ENCODE measurements at regions of chr10 and their contacts with region 1.

Region 1: DNA sequence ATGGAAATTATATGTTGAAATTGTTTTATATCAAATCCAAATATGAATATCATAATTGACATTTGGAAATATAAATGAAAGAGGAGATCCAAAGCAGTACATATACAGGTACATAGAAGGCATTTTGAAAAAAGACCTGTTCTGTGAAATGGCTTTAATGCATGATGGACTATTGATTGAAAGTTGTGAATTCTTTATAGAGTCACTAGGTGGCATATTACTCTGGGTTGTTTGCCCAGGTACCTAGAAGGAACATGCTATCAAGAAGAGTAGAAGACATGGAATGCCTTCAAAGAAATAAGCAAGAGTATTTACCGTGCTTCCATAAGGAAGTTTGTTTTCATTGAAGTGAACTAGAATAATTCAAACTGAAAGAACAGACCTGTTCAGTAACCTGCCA is 160.0 kb upstream of the ANK3 start:
- DNase-seq: peak; percentile 38
- H3K4me3 ChIP-seq: no peak overlapping the region
- H3K27ac ChIP-seq: no peak overlapping the region
- H3K4me1 ChIP-seq: no peaks in the 10 kb centered on the region
- H3K27me3 ChIP-seq: no peaks in the 10 kb centered on the region
- CTCF ChIP-seq: peak; percentile 30 to 61

Region 2: GRCh38 chr10:60444494-60445064 is 105.1 kb before region 1 on chr10:
- CTCF ChIA-PET with region 1: no interaction called
- dilution Hi-C with region 1: no loop called
- in situ Hi-C with region 1: no loop called
- intact Hi-C with region 1: loop called (anchors 5 kb)
- DNase-seq: no peak
- H3K4me3 ChIP-seq: no peak overlapping the region
- H3K27ac ChIP-seq: no peak overlapping the region
- H3K4me1 ChIP-seq: peaks cover 25% of the 10 kb centered on the region
- H3K27me3 ChIP-seq: no peaks in the 10 kb centered on the region
- CTCF ChIP-seq: peak; percentile 47 to 54

Region 3: DNA sequence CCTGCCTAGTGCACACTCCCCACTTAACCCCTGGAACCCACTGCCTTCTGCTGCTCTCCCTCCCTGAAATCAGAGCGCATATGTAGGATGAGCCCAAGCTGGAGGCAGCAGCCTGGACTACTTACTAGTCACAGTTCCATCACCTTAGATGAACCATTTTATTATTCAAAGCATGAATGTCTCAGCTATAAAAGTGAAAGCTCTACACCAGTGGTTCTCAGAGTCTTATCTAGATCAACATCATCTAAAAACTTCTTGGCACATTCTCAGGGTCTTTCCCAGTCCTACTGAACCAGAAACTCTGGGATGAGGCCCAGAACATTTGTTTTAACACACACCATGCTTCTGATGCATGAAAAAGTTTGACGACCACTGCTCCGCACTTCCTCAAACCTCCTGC is 59.7 kb before region 1 on chr10:
- CTCF ChIA-PET with region 1: no interaction called
- dilution Hi-C with region 1: no loop called
- in situ Hi-C with region 1: no loop called
- intact Hi-C with region 1: no loop called
- DNase-seq: no peak
- H3K4me3 ChIP-seq: no peak overlapping the region
- H3K27ac ChIP-seq: no peak overlapping the region
- H3K4me1 ChIP-seq: peaks cover 19% of the 10 kb centered on the region
- H3K27me3 ChIP-seq: no peaks in the 10 kb centered on the region
- CTCF ChIP-seq: no peak

Region 4: DNA sequence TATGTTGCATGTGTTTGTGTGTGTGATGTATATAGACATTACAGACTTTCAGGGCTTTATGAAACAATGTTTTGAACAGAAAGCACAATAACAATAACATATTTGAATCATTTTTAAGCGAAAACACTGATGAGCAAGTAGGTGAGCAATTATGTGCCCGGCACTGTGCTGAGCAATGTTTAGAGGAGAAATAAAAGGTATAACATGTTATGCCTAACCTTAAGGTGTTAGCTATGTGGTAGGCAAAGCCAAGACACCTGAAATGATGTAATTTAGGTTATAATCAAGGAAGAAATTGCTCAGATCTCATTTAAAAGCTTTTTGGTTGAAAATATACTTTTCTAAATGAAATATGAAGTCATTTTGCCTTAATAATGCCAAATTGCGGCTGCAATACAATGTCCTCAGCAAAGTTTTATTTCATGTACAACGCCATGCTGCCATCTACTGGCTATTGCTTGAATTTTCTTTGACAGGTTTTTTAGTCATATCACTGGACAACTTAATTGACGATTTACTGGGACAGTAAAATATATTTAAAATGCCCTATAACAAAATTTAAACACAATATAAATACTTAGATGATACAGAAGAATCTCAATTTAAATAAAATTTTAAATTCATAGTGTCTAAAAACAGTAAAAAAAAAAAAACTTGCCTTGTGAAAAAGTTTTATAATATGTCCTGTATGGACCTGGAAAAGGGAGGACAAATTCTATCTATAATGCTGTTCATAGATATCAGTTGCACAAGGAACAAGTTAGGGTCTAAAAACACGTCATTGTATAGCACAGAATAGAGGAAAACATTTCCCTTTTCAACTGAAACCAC is 97.5 kb after region 1 on chr10:
- CTCF ChIA-PET with region 1: no interaction called
- dilution Hi-C with region 1: no loop called
- in situ Hi-C with region 1: loop called in 1 of 2 experiments (anchors 10 kb)
- intact Hi-C with region 1: loop called (anchors 1 kb)
- DNase-seq: peak; percentile 31
- H3K4me3 ChIP-seq: no peak overlapping the region
- H3K27ac ChIP-seq: no peak overlapping the region
- H3K4me1 ChIP-seq: no peaks in the 10 kb centered on the region
- H3K27me3 ChIP-seq: no peaks in the 10 kb centered on the region
- CTCF ChIP-seq: peak; percentile 60 to 71

Region 5: DNA sequence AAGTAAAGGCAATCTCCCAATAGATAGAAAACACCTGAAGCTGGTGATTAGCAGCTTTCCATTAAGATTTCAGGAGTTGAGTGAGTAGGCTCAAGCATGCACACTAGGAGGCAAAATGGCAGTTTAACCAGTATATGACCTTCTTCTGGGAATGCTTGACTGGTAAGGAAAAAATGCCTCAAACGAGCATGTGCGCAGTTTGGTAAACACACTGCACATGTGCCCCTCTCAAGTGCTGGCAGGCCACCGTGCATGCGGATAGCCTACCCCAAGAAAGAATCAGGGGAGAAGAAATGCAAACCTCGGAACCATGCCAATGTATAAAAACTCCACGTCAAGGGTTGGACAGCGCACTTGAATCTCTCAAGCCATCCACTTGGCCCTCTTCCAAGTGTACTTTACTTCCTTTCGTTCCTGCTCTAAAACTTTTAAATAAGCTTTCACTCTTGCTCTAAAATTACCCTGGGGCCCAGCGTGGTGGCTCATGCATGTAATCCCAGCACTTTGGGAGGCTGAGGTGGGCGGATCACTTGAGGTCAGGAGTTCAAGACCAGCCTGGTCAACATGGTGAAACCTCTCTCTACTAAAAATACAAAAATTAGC is 129.8 kb after region 1 on chr10:
- CTCF ChIA-PET with region 1: no interaction called
- dilution Hi-C with region 1: no loop called
- in situ Hi-C with region 1: no loop called
- intact Hi-C with region 1: no loop called
- DNase-seq: no peak
- H3K4me3 ChIP-seq: no peak overlapping the region
- H3K27ac ChIP-seq: no peak overlapping the region
- H3K4me1 ChIP-seq: no peaks in the 10 kb centered on the region
- H3K27me3 ChIP-seq: no peaks in the 10 kb centered on the region
- CTCF ChIP-seq: no peak